Right ventricle myocardium inferior (tissue), 1 donor: ENCODE measurements at regions of chr6 and their contacts with region 1.

Region 1: DNA sequence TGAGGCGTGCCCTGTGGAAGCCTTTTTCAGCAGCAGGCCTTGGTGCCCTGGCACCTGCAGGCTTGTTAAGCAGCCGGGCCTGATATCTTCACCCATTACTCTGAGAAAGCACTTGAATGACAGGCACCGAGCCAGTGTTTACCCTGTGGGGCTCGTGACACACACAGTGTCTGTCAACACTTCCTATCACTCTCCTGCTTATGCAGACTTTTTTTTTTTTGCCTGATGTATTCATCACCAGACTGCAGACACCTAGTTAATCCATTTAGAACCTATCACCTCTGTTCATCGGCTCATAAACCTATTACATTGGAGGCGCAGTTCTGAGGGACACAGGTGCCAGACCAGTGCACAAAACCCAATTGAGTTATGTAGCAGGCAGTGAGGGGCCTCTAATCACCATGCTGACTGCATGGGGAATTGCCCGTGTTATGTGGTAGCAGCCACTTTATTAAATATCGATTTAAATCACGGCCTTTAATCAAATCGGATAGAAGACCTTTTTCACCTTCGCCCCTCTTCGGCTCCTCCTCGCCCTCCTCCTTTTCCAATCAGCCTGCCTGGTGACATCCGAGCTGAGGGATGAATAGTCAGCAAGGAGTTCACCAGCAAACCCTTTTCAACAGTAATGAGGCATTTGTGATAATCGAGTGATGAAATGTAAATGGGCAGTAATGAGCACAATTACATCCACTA is 962.9 kb upstream of the SLC35B3 start:
- DNase-seq: peak; percentile 75
- ATAC-seq: peak; percentile 96

Region 2: GRCh38 chr6:9360881-9361280 is 37.3 kb before region 1 on chr6:
- intact Hi-C with region 1: loop called (anchors 2 kb)
- DNase-seq: no peak
- ATAC-seq: no peak